Activated naive CD4-positive, alpha-beta T cell treated with anti-CD3 and anti-CD28 coated beads, Interleukin-2, amount 10 ng/mL, durations not matched to agents 7 days and 5 days (primary cell): ENCODE measurements at regions of chr12 and their contacts with region 1.

Region 1: DNA sequence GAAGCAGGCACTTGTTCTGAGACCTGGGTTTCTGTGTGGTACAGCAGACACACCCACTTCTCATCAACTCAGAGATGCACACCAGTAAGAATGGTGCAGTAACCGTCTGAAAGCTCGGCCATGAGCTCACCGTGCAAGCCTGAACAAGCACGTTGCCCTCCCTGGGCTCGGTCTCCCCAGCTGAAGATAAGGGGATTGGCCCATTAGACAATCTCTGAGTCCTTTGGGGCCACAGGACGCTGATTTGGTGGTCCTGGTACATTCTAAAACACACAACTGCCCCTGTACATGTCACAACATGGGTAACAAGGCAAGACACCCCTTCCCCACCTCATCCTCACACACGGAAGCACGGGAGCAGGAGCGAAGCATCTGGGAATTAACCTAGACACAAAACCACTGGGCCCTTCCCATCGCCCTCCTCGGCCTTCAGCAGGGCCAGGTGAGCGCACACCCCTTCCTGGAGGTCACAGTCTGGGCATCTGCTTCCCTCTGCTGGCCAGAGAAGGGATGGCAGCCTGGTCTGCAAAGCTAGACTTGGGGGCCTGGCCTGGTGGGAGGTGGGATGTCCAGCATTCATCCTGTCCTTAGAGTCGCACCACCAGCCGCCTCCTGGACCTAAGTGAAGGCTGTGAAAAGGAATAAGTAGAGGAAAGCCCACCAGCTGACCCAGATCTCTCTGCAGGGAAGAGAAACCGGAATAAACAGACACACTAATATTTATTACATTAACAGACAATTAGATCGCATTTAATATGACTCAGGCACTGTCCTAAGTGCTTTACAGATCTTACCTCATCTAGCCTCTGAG is 18.9 kb upstream of the SMUG1 start:
- DNase-seq: peak; percentile 87
- H3K4me3 Mint-ChIP-seq: no peak overlapping the region
- H3K27ac Mint-ChIP-seq: no peak overlapping the region
- H3K4me1 Mint-ChIP-seq: peaks cover 4% of the 10 kb centered on the region
- H3K27me3 Mint-ChIP-seq: peaks cover 82% of the 10 kb centered on the region

Region 2: GRCh38 chr12:53984901-53985709 is 222.6 kb before region 1 on chr12 and contains the start of gene HOXC10:
- CTCF ChIA-PET with region 1: interaction called, 12 read pairs
- DNase-seq: peak; percentile 85
- H3K4me3 Mint-ChIP-seq: peak within 1 kb of the TSS; percentile 46
- H3K27ac Mint-ChIP-seq: peak within 1 kb of the TSS; percentile 83
- H3K4me1 Mint-ChIP-seq: peaks cover 29% of the 10 kb centered on the region
- H3K27me3 Mint-ChIP-seq: peaks cover 100% of the 10 kb centered on the region

Region 3: GRCh38 chr12:54005853-54006686 is 201.6 kb before region 1 on chr12:
- CTCF ChIA-PET with region 1: interaction called, 67 read pairs
- DNase-seq: peak; percentile 87
- H3K4me3 Mint-ChIP-seq: peak overlapping the region; percentile 67
- H3K27ac Mint-ChIP-seq: no peak overlapping the region
- H3K4me1 Mint-ChIP-seq: peaks cover 20% of the 10 kb centered on the region
- H3K27me3 Mint-ChIP-seq: peaks cover 100% of the 10 kb centered on the region

Region 4: GRCh38 chr12:54017878-54018467 is 189.7 kb before region 1 on chr12:
- CTCF ChIA-PET with region 1: interaction called, 11 read pairs
- DNase-seq: peak; percentile 80
- H3K4me3 Mint-ChIP-seq: peak overlapping the region; percentile 73
- H3K27ac Mint-ChIP-seq: no peak overlapping the region
- H3K4me1 Mint-ChIP-seq: peaks cover 26% of the 10 kb centered on the region
- H3K27me3 Mint-ChIP-seq: peaks cover 100% of the 10 kb centered on the region

Region 5: GRCh38 chr12:54191550-54192022 is 16.1 kb before region 1 on chr12:
- CTCF ChIA-PET with region 1: interaction called, 48 read pairs
- DNase-seq: peak; percentile 85
- H3K4me3 Mint-ChIP-seq: no peak overlapping the region
- H3K27ac Mint-ChIP-seq: no peak overlapping the region
- H3K4me1 Mint-ChIP-seq: peaks cover 20% of the 10 kb centered on the region
- H3K27me3 Mint-ChIP-seq: peaks cover 66% of the 10 kb centered on the region